Activated naive CD4-positive, alpha-beta T cell treated with anti-CD3 and anti-CD28 coated beads for 36 hours (primary cell): ENCODE measurements at regions of chr5 and their contacts with region 1.

Region 1: DNA sequence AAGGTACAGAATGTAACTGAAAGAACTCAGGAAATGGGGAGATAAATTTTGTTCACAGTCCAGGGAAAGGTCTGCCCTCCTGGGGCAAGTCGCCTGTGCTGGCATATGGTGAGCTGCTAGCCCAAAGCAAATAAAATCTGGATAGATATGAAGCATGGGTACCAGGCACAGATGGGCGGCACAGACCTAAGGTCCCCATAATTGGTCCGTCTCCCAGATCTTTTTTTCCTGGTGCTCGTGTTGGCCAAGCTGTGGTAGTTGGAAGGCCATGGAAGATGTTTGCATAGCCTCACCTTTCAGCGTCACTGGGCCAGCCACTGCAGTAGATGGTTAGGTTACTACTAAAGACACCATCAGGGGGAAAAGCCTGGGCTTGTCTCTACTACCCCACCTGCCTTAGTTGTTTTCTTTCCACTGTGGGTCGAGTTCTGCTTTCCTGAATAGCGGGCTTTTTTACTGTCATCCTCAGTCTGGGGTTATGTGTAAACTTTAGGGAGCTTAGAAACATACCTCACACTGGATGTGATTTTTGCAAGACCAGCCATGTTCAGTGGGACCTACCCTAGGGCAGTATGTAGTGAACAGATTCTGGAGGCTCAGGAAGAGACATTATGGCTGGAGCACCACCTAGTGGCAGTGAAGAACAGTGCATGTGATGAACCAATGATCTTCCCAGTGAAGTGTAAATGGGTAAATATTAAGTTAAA is 24.2 kb upstream of the GLRX start:
- DNase-seq: peak; percentile 81
- H3K4me3 Mint-ChIP-seq: no peak overlapping the region
- H3K27ac Mint-ChIP-seq: no peak overlapping the region
- H3K4me1 Mint-ChIP-seq: peaks cover 9% of the 10 kb centered on the region
- H3K27me3 Mint-ChIP-seq: no peaks in the 10 kb centered on the region

Region 2: GRCh38 chr5:94916619-94917018 is 930.1 kb before region 1 on chr5:
- CTCF ChIA-PET with region 1: no interaction called
- intact Hi-C with region 1: no loop called
- DNase-seq: no peak
- H3K4me3 Mint-ChIP-seq: no peak overlapping the region
- H3K27ac Mint-ChIP-seq: no peak overlapping the region
- H3K4me1 Mint-ChIP-seq: no peaks in the 10 kb centered on the region
- H3K27me3 Mint-ChIP-seq: peaks cover 3% of the 10 kb centered on the region

Region 3: GRCh38 chr5:94968507-94969095 is 878.1 kb before region 1 on chr5:
- CTCF ChIA-PET with region 1: no interaction called
- intact Hi-C with region 1: loop called (anchors 1 kb)
- DNase-seq: peak; percentile 10
- H3K4me3 Mint-ChIP-seq: no peak overlapping the region
- H3K27ac Mint-ChIP-seq: no peak overlapping the region
- H3K4me1 Mint-ChIP-seq: no peaks in the 10 kb centered on the region
- H3K27me3 Mint-ChIP-seq: no peaks in the 10 kb centered on the region

Region 4: DNA sequence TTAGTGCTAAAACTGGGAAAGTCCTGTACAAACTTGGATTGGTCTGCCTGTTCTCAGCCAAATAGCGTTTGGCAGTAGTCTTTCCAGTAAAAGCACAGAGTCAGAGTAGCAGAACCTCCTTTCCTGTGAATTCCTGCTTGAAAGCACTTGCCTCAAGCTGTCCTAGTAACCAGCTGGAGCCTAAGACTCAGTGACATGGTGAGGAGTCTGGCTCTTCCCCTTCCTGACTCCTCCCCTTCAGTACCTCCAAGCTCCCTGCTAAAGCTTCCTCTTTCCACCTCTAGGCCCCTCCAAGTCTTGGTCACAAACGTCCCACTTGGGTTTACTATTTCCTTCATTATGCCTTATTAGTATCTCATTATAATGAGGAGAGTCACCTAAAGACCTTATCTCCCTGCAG is 476.9 kb before region 1 on chr5:
- CTCF ChIA-PET with region 1: no interaction called
- intact Hi-C with region 1: no loop called
- DNase-seq: no peak
- H3K4me3 Mint-ChIP-seq: no peak overlapping the region
- H3K27ac Mint-ChIP-seq: no peak overlapping the region
- H3K4me1 Mint-ChIP-seq: no peaks in the 10 kb centered on the region
- H3K27me3 Mint-ChIP-seq: peaks cover 14% of the 10 kb centered on the region

Region 5: GRCh38 chr5:95664204-95664786 is 182.4 kb before region 1 on chr5:
- CTCF ChIA-PET with region 1: interaction called, 15 read pairs
- intact Hi-C with region 1: loop called (anchors 1 kb)
- DNase-seq: peak; percentile 63
- H3K4me3 Mint-ChIP-seq: no peak overlapping the region
- H3K27ac Mint-ChIP-seq: no peak overlapping the region
- H3K4me1 Mint-ChIP-seq: no peaks in the 10 kb centered on the region
- H3K27me3 Mint-ChIP-seq: no peaks in the 10 kb centered on the region

Region 6: DNA sequence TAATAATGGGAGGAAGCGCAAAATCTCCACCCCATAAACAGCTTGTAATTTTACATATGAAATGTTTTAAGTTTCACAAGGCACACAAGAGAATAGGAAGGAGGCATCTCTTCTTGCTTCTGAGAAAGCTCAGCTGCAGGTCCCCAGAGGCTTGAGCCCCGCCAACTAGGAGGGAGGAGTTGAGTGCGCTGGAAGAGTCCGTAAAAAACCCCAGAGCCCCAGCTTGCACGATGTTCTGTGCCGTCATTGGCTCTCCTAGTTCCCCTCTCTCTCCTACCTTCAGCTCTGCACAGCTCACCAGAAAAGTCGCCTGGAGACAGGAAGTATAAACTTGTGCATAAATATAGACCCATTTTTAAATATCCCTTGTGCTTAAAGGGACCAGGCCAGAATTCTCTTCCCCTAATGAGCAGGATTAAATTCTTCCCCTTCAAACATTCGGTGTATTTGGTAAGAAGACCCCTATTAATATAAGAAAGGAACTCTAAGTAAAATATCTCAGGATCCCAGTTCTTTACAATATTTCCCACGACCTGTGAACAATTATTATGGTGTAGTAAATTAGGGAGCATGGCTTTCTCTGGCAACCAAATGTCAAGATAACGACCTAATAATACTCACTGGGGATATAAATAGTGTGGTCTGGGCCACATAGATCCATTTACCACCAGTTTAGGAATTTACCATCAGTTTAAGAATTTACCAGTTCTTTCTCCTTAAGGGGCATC is 37.9 kb before region 1 on chr5:
- CTCF ChIA-PET with region 1: interaction called, 13 read pairs
- intact Hi-C with region 1: loop called (anchors 1 kb)
- DNase-seq: peak; percentile 92
- H3K4me3 Mint-ChIP-seq: peak overlapping the region; percentile 57
- H3K27ac Mint-ChIP-seq: peak overlapping the region; percentile 81
- H3K4me1 Mint-ChIP-seq: peaks cover 55% of the 10 kb centered on the region
- H3K27me3 Mint-ChIP-seq: no peaks in the 10 kb centered on the region

Region 7: DNA sequence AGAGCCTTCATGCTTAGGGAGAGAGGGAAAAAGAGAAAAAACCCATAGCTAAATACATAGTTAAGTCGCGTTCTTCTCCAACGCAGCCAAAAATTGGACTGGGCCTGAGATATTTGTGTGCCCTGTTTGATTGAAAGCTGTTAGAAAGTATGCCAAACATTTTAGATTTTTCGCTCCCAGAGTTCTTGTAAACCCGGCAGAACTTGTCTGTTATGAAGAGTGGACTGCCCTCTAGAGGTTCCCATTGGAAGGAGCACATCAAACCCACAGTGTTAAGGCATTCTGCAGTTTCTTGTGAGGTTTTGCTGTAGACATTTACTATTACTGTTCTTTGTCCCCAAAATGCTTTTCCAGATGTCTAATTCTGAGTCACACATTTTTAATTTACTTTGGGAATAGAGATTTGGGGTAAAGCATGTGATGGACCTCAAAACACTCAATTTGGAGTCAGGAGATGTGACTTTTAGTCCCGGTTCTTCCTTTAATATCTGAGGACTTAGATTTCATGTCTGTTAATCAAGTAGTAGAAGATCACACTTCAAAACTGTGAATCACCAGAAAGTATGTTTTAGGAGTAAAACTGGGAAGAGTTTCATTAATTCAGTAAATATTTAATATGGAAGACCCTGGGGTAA is 489.8 kb after region 1 on chr5:
- CTCF ChIA-PET with region 1: interaction called, 10 read pairs
- intact Hi-C with region 1: no loop called
- DNase-seq: peak; percentile 81
- H3K4me3 Mint-ChIP-seq: no peak overlapping the region
- H3K27ac Mint-ChIP-seq: no peak overlapping the region
- H3K4me1 Mint-ChIP-seq: peaks cover 18% of the 10 kb centered on the region
- H3K27me3 Mint-ChIP-seq: peaks cover 16% of the 10 kb centered on the region